GM12878 (cell line): ENCODE measurements at regions of chr4 and their contacts with region 1.

Region 1: GRCh38 chr4:107736924-107737448 is 17.0 kb upstream of the PAPSS1 start:
- DNase-seq: no peak
- ATAC-seq: peak; percentile 89
- H3K4me3 ChIP-seq: no peak overlapping the region
- H3K27ac ChIP-seq: no peak overlapping the region
- H3K4me1 ChIP-seq: no peaks in the 10 kb centered on the region
- H3K27me3 ChIP-seq: no peaks in the 10 kb centered on the region
- CTCF ChIP-seq: peak; percentile 76 to 83 (median 83)
- EP300 ChIP-seq: no peak
- POLR2A ChIP-seq: no peak
- RAD21 ChIP-seq: peak; percentile 87

Region 2: DNA sequence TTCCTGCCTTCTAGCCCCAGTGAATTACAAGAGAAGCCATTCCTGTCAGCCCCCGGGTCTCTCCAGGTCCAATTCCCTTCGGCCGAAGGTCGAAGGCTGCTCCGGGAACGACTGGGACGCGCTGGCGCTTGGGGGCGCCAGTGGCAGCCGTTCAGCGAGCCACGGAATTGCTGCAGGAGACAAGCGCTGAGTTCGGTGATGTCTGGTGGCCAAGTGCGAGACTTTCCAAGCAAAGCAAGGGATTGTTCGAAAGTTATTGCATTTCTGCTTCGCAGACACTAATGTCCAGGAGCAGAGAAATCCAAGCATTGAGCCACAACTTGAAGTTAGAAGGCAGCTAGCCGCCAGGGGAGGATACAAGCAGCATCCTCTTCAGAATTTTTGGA is 699.8 kb before region 1 on chr4:
- CTCF ChIA-PET with region 1: no interaction called
- POLR2A ChIA-PET with region 1: no interaction called
- RAD21 ChIA-PET with region 1: no interaction called
- SMC1A ChIA-PET with region 1: no interaction called
- in situ Hi-C with region 1: loop called (anchors 25 kb)
- intact Hi-C with region 1: no loop called
- DNase-seq: no peak
- ATAC-seq: peak; percentile 48; the same call in 2 of the 3 replicates
- H3K4me3 ChIP-seq: no peak overlapping the region
- H3K27ac ChIP-seq: no peak overlapping the region
- H3K4me1 ChIP-seq: peaks cover 6% of the 10 kb centered on the region
- H3K27me3 ChIP-seq: peaks cover 26% of the 10 kb centered on the region in 2 experiments
- CTCF ChIP-seq: peak; percentile 20 to 27 (median 20); a peak in 5 of 6 replicates
- EP300 ChIP-seq: no peak
- POLR2A ChIP-seq: no peak
- RAD21 ChIP-seq: no peak

Region 3: DNA sequence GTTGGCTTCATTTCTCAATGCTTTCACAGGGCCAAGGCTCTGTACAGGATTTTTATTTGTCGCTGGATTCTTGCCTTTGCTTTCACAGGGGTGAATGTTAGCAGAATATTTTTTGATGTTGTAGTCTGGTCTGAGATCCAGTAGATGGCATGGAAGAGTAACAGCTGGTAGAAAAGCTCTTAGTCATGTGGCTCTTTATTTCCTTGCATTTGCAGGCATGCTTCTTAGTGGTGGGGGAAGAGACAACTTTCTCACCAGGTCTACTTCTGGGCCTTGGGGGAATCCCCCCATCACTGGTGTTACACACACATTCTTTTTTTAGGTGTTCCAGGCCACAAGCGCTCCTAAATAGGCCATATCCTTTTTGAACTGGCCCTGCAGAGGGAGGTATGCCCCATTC is 642.7 kb before region 1 on chr4:
- CTCF ChIA-PET with region 1: no interaction called
- POLR2A ChIA-PET with region 1: no interaction called
- RAD21 ChIA-PET with region 1: no interaction called
- SMC1A ChIA-PET with region 1: no interaction called
- in situ Hi-C with region 1: no loop called
- intact Hi-C with region 1: loop called (anchors 10 kb)
- DNase-seq: no peak
- ATAC-seq: peak; percentile 87
- H3K4me3 ChIP-seq: no peak overlapping the region
- H3K27ac ChIP-seq: no peak overlapping the region
- H3K4me1 ChIP-seq: no peaks in the 10 kb centered on the region
- H3K27me3 ChIP-seq: no peaks in the 10 kb centered on the region
- CTCF ChIP-seq: peak; percentile 12 to 26 (median 19); a peak in 3 of 6 replicates
- EP300 ChIP-seq: no peak
- POLR2A ChIP-seq: no peak
- RAD21 ChIP-seq: peak; percentile 58

Region 4: DNA sequence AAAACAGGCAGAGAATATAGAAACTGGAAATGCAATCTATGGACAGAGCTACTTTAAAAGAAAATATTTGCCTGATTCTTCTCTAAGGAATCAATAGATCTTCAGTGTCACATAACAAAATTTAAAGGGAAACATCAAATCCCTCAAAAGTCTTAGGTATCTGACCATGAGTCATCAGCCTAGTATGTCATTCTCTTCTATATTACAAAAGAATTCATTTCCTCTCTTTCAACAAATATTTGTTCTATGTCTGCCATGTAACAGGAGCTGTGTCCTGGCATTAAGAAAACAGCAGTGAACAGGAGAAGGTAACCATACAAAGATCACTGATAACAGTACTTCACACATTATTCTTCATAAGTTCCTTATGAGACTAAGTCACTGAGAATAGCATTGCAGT is 457.3 kb before region 1 on chr4:
- CTCF ChIA-PET with region 1: no interaction called
- POLR2A ChIA-PET with region 1: no interaction called
- RAD21 ChIA-PET with region 1: no interaction called
- SMC1A ChIA-PET with region 1: no interaction called
- in situ Hi-C with region 1: no loop called
- intact Hi-C with region 1: loop called (anchors 10 kb)
- DNase-seq: no peak
- ATAC-seq: no peak
- H3K4me3 ChIP-seq: no peak overlapping the region
- H3K27ac ChIP-seq: no peak overlapping the region
- H3K4me1 ChIP-seq: no peaks in the 10 kb centered on the region
- H3K27me3 ChIP-seq: no peaks in the 10 kb centered on the region
- CTCF ChIP-seq: no peak
- EP300 ChIP-seq: no peak
- POLR2A ChIP-seq: no peak
- RAD21 ChIP-seq: no peak

Region 5: GRCh38 chr4:107719922-107720722 is 16.9 kb before region 1 on chr4 and contains the start of gene PAPSS1:
- CTCF ChIA-PET with region 1: interaction called, 27 read pairs
- POLR2A ChIA-PET with region 1: interaction called, 6 read pairs
- RAD21 ChIA-PET with region 1: interaction called, 15 read pairs
- SMC1A ChIA-PET with region 1: interaction called, 16 read pairs
- in situ Hi-C with region 1: no loop called
- intact Hi-C with region 1: no loop called
- DNase-seq: peak; percentile 81
- ATAC-seq: peak; percentile 89
- H3K4me3 ChIP-seq: peak within 1 kb of the TSS; percentile 87
- H3K27ac ChIP-seq: peak within 1 kb of the TSS; percentile 54
- H3K4me1 ChIP-seq: 0 out of 2 replicates have a peak, but pooled peaks cover 3% of the 10 kb centered on the region
- H3K27me3 ChIP-seq: no peaks in the 10 kb centered on the region
- CTCF ChIP-seq: no peak
- EP300 ChIP-seq: no peak
- POLR2A ChIP-seq: peak; percentile 75
- RAD21 ChIP-seq: 0 out of 2 replicates have a peak, but pooled peaks have one; percentile 7
- polyA plus RNA-seq, gene PAPSS1: 29.8 to 35.9 TPM